ENCODE measurements at regions of chr12 and their contacts with region 1.

Region 1: DNA sequence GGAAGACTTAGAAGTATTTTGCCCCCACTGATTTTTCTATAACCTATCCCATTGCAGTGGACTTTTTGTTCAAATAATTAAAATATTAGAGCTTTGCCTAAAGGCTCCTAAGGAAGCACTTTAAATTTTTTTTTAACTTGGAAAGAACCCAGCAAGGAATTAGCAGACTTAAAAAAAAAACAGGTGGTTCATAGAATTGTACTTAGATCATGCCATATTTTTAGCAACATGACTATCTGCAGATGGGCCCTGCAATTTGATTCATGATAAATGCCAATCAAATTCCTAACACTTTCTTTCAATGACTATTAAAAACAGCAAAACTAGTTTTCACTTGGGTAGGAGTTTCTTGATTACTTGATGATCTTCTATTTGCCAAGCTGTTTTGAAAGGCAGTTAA is 11.5 kb downstream of the ADAMTS20 start:
- DNase-seq: no peak
- H3K4me3 ChIP-seq: no peak overlapping the region
- H3K27ac ChIP-seq: no peak overlapping the region
- H3K4me1 ChIP-seq: no peaks in the 10 kb centered on the region
- H3K27me3 ChIP-seq: no peaks in the 10 kb centered on the region
- CTCF ChIP-seq: no peak
- POLR2A ChIP-seq: no peak

Region 2: DNA sequence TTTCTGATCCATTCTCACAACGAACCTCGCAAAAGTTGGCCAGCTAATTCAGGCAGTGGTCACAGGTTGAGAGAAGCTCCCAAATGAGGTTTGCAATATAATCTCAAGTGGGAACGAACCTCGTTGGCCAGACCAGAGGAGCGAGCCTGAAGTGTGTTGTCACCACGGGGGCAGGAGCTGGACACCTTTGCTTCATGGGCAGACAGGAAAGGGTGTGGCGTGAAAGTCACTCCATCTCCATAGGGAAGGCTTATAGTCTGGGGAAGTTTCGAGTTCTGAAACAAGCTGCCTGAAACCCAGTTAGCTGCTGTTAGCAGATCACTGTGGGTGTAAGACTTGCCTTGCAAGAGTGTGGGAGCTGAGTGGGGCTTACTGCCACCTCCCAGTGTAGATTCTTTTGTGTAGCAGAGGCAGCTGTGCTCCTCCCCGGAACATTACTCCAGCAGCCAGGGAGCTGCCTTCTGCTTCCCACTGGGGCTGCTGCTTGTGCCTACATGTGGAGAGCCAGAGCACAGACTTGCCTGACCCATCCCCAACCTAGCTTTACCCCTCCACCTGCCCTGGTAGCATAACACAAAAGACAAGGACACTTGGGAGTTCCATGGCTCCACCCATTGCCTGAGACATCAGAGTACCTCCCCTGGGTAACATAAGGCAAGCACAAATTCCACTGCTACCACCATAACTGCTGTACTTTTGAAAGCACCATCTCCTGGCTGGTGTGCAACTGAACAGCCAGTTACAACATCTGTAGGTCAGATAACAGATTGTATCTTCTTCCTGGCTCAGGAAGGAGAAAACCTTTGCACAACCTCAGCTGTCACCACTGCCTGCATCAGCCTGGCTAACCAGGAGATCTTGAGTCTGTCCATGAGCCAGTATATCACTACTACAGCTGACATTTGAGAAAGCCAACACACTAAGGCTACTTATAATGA is 58.1 kb before region 1 on chr12:
- CTCF ChIA-PET with region 1: no interaction called
- POLR2A ChIA-PET with region 1: no interaction called
- dilution Hi-C with region 1: no loop called
- intact Hi-C with region 1: no loop called
- DNase-seq: no peak
- H3K4me3 ChIP-seq: no peak overlapping the region
- H3K27ac ChIP-seq: no peak overlapping the region
- H3K4me1 ChIP-seq: no peaks in the 10 kb centered on the region
- H3K27me3 ChIP-seq: no peaks in the 10 kb centered on the region
- CTCF ChIP-seq: no peak
- POLR2A ChIP-seq: no peak

Region 3: GRCh38 chr12:43599071-43599470 is 58.6 kb after region 1 on chr12:
- CTCF ChIA-PET with region 1: no interaction called
- POLR2A ChIA-PET with region 1: no interaction called
- dilution Hi-C with region 1: no loop called
- intact Hi-C with region 1: loop called (anchors 10 kb)
- DNase-seq: no peak
- H3K4me3 ChIP-seq: no peak overlapping the region
- H3K27ac ChIP-seq: no peak overlapping the region
- H3K4me1 ChIP-seq: no peaks in the 10 kb centered on the region
- H3K27me3 ChIP-seq: no peaks in the 10 kb centered on the region
- CTCF ChIP-seq: no peak
- POLR2A ChIP-seq: no peak

Measured in endothelial cell of umbilical vein (primary cell).